GM12878 (cell line): ENCODE measurements at regions of chr4 and their contacts with region 1.

Region 1: GRCh38 chr4:36244257-36245079 is at the start of gene ARAP2:
- DNase-seq: no peak
- ATAC-seq: peak; percentile 72
- H3K4me3 ChIP-seq: peak within 1 kb of the TSS; percentile 84
- H3K27ac ChIP-seq: peak within 1 kb of the TSS; percentile 88
- H3K4me1 ChIP-seq: no peaks in the 10 kb centered on the region
- H3K27me3 ChIP-seq: no peaks in the 10 kb centered on the region
- CTCF ChIP-seq: peak in 1 of 3 experiments; percentile 12; a peak in 1 of 6 replicates
- EP300 ChIP-seq: no peak
- POLR2A ChIP-seq: peak; percentile 66; the same call in 1 of the 2 replicates
- RAD21 ChIP-seq: 0 out of 2 replicates have a peak, but pooled peaks have one; percentile 10
- polyA plus RNA-seq, gene ARAP2: 5.4 to 5.7 TPM

Region 2: GRCh38 chr4:36208893-36209473 is 35.5 kb before region 1 on chr4:
- CTCF ChIA-PET with region 1: interaction called, 7 read pairs
- POLR2A ChIA-PET with region 1: interaction called, 4 read pairs
- RAD21 ChIA-PET with region 1: interaction called, 9 read pairs
- SMC1A ChIA-PET with region 1: interaction called, 14 read pairs
- in situ Hi-C with region 1: no loop called
- intact Hi-C with region 1: no loop called
- DNase-seq: no peak
- ATAC-seq: peak; percentile 64
- H3K4me3 ChIP-seq: no peak overlapping the region
- H3K27ac ChIP-seq: peak overlapping the region; percentile 6; the same call in 1 of the 2 replicates
- H3K4me1 ChIP-seq: peaks cover 21% of the 10 kb centered on the region
- H3K27me3 ChIP-seq: no peaks in the 10 kb centered on the region
- CTCF ChIP-seq: no peak
- EP300 ChIP-seq: no peak
- POLR2A ChIP-seq: no peak
- RAD21 ChIP-seq: no peak

Region 3: GRCh38 chr4:36255577-36255976 is 11.1 kb after region 1 on chr4:
- CTCF ChIA-PET with region 1: interaction called, 23 read pairs
- POLR2A ChIA-PET with region 1: interaction called, 9 read pairs
- RAD21 ChIA-PET with region 1: interaction called, 51 read pairs
- SMC1A ChIA-PET with region 1: interaction called, 78 read pairs
- in situ Hi-C with region 1: no loop called
- intact Hi-C with region 1: no loop called
- DNase-seq: peak; percentile 92
- ATAC-seq: peak; percentile 87
- H3K4me3 ChIP-seq: no peak overlapping the region
- H3K27ac ChIP-seq: peak overlapping the region; percentile 85
- H3K4me1 ChIP-seq: peaks cover 11% of the 10 kb centered on the region
- H3K27me3 ChIP-seq: no peaks in the 10 kb centered on the region
- CTCF ChIP-seq: no peak
- EP300 ChIP-seq: no peak; a peak in 1 of 4 replicates
- POLR2A ChIP-seq: no peak
- RAD21 ChIP-seq: 0 out of 2 replicates have a peak, but pooled peaks have one; percentile 16

Region 4: DNA sequence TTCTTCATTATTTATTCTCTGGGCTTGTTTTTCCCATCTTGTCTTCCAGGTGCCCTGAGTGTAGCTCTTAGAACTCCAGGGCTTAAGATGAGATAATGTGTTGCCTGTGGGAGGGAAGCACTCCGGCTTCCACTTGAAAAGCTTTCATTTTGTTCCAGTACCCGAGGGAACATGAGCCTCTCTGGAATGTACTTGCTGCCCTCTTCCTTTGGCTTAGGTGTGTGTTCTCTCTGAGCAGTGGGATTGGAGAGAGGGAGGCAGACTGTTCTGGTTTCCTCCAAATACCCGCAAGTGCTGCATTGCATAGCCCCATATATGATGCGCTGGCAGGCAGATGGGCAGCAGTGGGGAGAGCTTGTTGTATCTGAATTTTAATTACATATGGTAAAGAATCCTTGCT is 36.1 kb after region 1 on chr4:
- CTCF ChIA-PET with region 1: interaction called, 11 read pairs
- POLR2A ChIA-PET with region 1: interaction called, 4 read pairs
- RAD21 ChIA-PET with region 1: interaction called, 23 read pairs
- SMC1A ChIA-PET with region 1: interaction called, 18 read pairs
- in situ Hi-C with region 1: no loop called
- intact Hi-C with region 1: no loop called
- DNase-seq: no peak
- ATAC-seq: no peak
- H3K4me3 ChIP-seq: no peak overlapping the region
- H3K27ac ChIP-seq: no peak overlapping the region
- H3K4me1 ChIP-seq: peaks cover 5% of the 10 kb centered on the region
- H3K27me3 ChIP-seq: no peaks in the 10 kb centered on the region
- CTCF ChIP-seq: no peak
- EP300 ChIP-seq: no peak
- POLR2A ChIP-seq: no peak
- RAD21 ChIP-seq: no peak

Region 5: DNA sequence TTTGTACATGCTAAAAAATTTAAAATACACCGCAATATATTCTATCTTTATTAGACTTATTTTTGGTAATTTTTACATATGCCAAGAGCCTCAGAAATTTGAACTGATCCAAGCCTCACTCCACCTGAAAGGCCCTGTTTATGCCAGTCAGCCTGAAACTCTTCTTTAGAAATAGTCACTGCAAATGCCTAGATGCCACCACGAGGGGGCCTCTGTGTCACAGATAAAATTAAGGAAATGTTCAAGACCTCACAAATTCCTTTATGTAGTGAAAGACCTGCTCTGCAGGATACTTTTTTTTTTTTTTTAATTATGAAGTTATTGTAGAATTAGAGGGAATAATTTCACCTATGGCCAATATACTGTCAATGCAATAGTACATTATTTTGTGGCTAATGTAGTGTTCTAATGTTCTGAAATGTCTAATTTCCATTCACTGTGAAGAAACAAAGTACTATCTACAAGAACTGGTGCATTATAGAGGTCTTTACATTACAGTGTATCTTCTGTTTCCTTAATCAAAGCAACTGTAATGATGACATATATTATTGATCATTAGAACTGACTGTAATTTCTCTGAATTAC is 106.7 kb after region 1 on chr4:
- CTCF ChIA-PET with region 1: interaction called, 5 read pairs
- POLR2A ChIA-PET with region 1: interaction called, 4 read pairs
- RAD21 ChIA-PET with region 1: interaction called, 32 read pairs
- SMC1A ChIA-PET with region 1: interaction called, 11 read pairs
- in situ Hi-C with region 1: no loop called
- intact Hi-C with region 1: loop called (anchors 2 kb)
- DNase-seq: peak; percentile 37
- ATAC-seq: peak; percentile 72
- H3K4me3 ChIP-seq: no peak overlapping the region
- H3K27ac ChIP-seq: no peak overlapping the region
- H3K4me1 ChIP-seq: peaks cover 13% of the 10 kb centered on the region
- H3K27me3 ChIP-seq: no peaks in the 10 kb centered on the region
- CTCF ChIP-seq: peak; percentile 70 to 87 (median 78)
- EP300 ChIP-seq: no peak
- POLR2A ChIP-seq: no peak
- RAD21 ChIP-seq: peak; percentile 96